ENCODE measurements at regions of chr6 and their contacts with region 1.

Region 1: DNA sequence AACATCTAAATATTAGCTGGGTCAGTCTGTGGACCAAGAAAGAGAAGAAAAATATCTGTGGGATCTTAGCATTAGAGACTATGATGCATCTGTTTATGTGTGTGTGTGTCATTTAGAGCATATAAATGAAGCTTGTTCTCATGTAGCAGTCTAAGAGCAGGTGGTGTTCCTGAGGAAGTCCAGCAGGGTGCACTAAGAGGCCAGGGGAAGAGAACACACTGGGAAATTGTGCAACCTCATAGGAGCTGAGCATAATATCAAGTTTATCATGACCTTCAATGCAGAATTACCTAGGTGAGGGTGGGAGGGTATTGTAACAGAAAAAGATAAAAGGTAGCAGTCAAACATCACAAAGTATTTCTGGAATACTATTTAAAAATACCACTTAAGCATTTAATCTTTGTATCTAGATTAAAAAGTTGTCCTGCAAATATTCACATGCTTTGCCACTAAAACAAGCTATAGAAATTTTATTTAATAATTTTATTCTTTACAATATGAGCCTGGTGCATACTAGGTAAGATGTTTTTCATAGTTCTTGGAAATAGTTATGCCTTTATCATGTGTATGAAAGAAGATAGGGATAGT is 80.5 kb downstream of the SMPDL3A start:
- DNase-seq: peak; percentile 18 to 60 (median 33)
- H3K4me3 ChIP-seq: no peak overlapping the region
- H3K27ac ChIP-seq: no peak overlapping the region
- H3K4me1 ChIP-seq: no peaks in the 10 kb centered on the region
- H3K27me3 ChIP-seq: no peaks in the 10 kb centered on the region
- CTCF ChIP-seq: peak; percentile 42 to 59 (median 50)
- POLR2A ChIP-seq: no peak

Region 2: GRCh38 chr6:122347280-122347679 is 522.3 kb before region 1 on chr6:
- intact Hi-C with region 1: no loop called
- DNase-seq: no peak
- H3K4me3 ChIP-seq: no peak overlapping the region
- H3K27ac ChIP-seq: no peak overlapping the region
- H3K4me1 ChIP-seq: no peaks in the 10 kb centered on the region
- H3K27me3 ChIP-seq: no peaks in the 10 kb centered on the region
- CTCF ChIP-seq: no peak
- POLR2A ChIP-seq: no peak

Region 3: GRCh38 chr6:123316733-123317323 is 447.3 kb after region 1 on chr6:
- intact Hi-C with region 1: loop called in 1 of 2 experiments (anchors 5 kb)
- DNase-seq: no peak
- H3K4me3 ChIP-seq: no peak overlapping the region
- H3K27ac ChIP-seq: no peak overlapping the region
- H3K4me1 ChIP-seq: no peaks in the 10 kb centered on the region
- H3K27me3 ChIP-seq: no peaks in the 10 kb centered on the region
- CTCF ChIP-seq: peak; percentile 21 to 69 (median 54)
- POLR2A ChIP-seq: no peak

Measured in adrenal gland (tissue), 19 donors.